ENCODE measurements at regions of chr19 and their contacts with region 1.

Region 1: DNA sequence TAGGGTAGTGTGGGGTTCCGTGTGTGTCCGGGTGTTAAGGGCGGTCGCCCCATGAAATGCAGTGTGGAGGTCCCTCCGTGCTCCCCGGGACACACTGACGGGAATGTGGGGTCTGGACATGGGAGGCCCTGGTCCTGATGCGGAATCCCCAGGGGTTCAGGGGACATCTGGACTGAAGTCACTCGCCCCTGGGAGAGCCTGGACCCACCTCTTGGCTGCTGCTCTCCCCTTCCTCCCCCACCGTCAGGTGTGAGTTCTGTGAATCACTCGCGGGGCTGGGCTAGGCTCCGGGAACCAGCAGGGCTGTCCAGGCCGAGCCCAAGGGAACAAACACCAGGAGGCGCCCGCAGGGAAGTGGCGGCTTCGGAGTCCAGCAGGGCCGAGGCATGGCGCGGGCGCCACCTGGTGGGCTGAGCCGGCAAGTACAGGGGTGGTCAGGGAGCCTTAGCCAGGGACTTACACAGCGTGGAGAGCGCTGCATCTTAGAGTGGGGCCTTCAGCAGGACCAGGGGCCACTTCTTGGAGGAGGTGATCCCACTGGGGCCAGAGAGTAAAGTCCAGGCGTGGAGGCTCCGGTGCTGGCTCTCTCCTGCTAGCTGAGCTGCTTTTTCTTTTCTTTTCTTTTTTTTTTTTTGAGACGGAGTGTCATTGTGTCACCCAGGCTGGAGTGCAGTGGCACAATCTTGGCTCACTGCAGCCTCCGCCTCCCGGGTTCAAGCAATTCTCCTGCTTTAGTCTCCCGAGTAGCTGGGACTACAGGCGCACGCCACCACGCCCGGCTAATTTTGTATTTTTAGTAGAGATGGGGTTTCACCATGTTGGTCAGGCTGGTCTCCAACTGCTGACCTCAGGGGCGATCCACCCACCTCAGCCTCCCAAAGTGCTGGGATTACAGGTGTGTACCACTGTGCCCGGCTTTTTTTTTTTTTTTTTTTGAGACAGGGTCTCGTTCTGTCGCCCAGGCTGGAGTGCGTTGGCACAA is 20.1 kb downstream of the WTIP start:
- DNase-seq: peak; percentile 94
- ATAC-seq: peak; percentile 95
- H3K4me3 Mint-ChIP-seq: no peak overlapping the region
- H3K27ac Mint-ChIP-seq: no peak overlapping the region
- H3K4me1 Mint-ChIP-seq: peaks cover 6% of the 10 kb centered on the region
- H3K27me3 Mint-ChIP-seq: peaks cover 10% of the 10 kb centered on the region

Region 2: DNA sequence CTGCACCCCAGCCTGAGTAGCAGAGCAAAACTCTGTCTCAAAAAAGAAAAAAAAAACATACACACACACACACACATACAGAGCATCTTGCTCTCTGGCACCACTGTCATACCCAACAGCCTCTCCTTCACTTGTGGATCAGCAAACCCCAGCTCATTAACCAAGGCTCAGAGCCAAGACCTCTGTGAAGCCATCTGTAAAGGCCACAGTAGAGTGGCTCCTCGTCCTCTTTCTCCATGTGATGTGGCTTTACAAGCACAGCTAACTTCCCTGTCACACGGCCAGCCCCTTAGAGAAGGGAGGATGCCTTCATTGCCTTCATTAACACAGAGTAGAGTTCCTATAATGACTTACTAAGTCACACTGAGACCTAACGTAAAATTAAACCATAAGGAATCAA is 392.0 kb before region 1 on chr19:
- CTCF ChIA-PET with region 1: no interaction called
- POLR2A ChIA-PET with region 1: no interaction called
- intact Hi-C with region 1: no loop called
- DNase-seq: no peak
- ATAC-seq: no peak
- H3K4me3 Mint-ChIP-seq: no peak overlapping the region
- H3K27ac Mint-ChIP-seq: no peak overlapping the region
- H3K4me1 Mint-ChIP-seq: no peaks in the 10 kb centered on the region
- H3K27me3 Mint-ChIP-seq: peaks cover 7% of the 10 kb centered on the region

Region 3: GRCh38 chr19:34241513-34242337 is 259.9 kb before region 1 on chr19:
- CTCF ChIA-PET with region 1: no interaction called
- POLR2A ChIA-PET with region 1: no interaction called
- intact Hi-C with region 1: no loop called
- DNase-seq: peak; percentile 69
- ATAC-seq: peak; percentile 88
- H3K4me3 Mint-ChIP-seq: no peak overlapping the region
- H3K27ac Mint-ChIP-seq: no peak overlapping the region
- H3K4me1 Mint-ChIP-seq: peaks cover 3% of the 10 kb centered on the region
- H3K27me3 Mint-ChIP-seq: no peaks in the 10 kb centered on the region

Region 4: GRCh38 chr19:34475026-34475974 is 26.3 kb before region 1 on chr19:
- CTCF ChIA-PET with region 1: interaction called, 4 read pairs
- POLR2A ChIA-PET with region 1: no interaction called
- intact Hi-C with region 1: loop called (anchors 1 to 2 kb)
- DNase-seq: peak; percentile 69
- ATAC-seq: peak; percentile 94
- H3K4me3 Mint-ChIP-seq: no peak overlapping the region
- H3K27ac Mint-ChIP-seq: peak overlapping the region; percentile 88
- H3K4me1 Mint-ChIP-seq: peaks cover 19% of the 10 kb centered on the region
- H3K27me3 Mint-ChIP-seq: peaks cover 10% of the 10 kb centered on the region

Region 5: GRCh38 chr19:34534206-34534605 is 32.6 kb after region 1 on chr19:
- CTCF ChIA-PET with region 1: no interaction called
- POLR2A ChIA-PET with region 1: no interaction called
- intact Hi-C with region 1: no loop called
- DNase-seq: no peak
- ATAC-seq: no peak
- H3K4me3 Mint-ChIP-seq: no peak overlapping the region
- H3K27ac Mint-ChIP-seq: no peak overlapping the region
- H3K4me1 Mint-ChIP-seq: no peaks in the 10 kb centered on the region
- H3K27me3 Mint-ChIP-seq: peaks cover 42% of the 10 kb centered on the region